Esophagus squamous epithelium (tissue), 5 donors: ENCODE measurements at regions of chr3 and their contacts with region 1.

Region 1: DNA sequence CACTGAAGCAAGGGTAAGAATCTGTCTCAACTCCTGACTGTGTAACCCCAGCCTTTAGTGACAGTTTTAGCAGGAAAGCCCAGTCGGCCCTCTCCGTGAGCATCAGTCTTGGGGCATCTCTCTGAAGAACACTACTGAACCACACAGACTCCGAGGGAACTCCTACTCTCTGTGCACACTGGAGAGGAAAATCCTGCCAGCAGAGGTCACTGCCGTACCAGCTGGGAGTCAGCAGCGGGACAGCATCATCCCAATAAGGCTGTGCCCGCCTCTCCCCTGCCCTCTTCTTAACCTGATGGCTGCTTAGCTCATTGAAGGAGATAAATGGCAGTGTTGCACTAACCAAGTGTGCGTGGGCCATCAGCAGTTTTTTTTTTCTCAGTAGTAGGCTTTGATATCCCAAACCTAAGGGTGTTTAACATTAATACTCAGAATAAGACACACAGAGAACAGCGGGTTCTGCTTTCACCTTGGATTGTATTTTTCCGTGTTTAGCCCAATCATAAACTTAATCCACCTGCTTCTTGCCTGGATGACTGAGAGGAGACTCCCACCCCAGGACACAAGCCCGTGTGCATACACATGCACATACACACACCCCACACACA is 26.6 kb upstream of the RASA2 start:
- DNase-seq: peak; percentile 27
- H3K4me3 ChIP-seq: no peak overlapping the region
- H3K27ac ChIP-seq: no peak overlapping the region
- H3K4me1 ChIP-seq: peaks cover 0 to 9% (median 0%) of the 10 kb centered on the region in 3 donors
- H3K27me3 ChIP-seq: peaks cover 0 to 22% (median 0%) of the 10 kb centered on the region in 4 donors
- CTCF ChIP-seq: peak; percentile 80 to 89 (median 82)
- POLR2A ChIP-seq: no peak

Region 2: DNA sequence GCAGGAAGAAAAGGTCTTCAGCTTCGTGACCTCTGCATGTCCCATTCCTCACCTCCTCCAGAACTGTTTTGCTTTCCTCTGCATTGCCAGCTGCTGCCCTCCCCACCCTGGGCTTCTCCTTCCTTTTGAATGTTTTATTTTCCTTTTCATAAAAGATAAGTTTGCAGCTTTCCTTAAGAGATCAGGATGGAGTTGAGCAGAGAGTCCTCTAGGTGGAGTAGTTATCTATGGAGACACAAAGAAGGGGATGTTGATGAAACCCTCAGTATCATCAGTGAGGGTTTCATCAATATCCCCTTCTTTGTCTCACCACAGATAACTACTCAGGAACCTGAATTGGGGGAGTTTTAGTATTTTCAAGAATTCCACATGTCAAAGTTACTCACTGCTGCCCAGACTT is 537.6 kb before region 1 on chr3:
- intact Hi-C with region 1: no loop called
- DNase-seq: no peak
- H3K4me3 ChIP-seq: no peak overlapping the region
- H3K27ac ChIP-seq: no peak overlapping the region
- H3K4me1 ChIP-seq: no peaks in the 10 kb centered on the region
- H3K27me3 ChIP-seq: peaks cover 0 to 15% (median 0%) of the 10 kb centered on the region in 4 donors
- CTCF ChIP-seq: peak in 2 of 6 experiments; percentile 7 to 16
- POLR2A ChIP-seq: no peak

Region 3: DNA sequence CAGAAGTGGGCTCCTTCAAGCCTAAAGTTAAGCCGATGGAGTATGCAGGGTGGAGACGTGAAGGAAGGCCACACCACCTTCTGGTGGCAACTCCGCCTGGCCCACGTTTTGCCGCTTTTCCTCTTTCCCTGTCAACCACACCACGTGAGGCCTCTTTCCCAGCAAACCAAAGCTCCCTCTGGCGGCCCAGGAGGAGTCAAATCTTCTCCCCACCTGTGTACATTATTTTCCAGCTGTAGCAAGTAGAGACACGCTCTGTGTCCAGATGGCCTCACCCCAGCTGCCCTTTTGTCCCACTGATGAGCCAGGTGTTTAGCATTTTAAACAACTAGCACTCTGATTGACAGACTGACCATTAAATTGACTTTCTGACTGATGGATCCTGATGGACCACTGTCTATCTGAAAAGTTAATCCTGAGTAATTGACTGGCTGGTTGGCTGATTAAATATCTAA is 151.5 kb before region 1 on chr3:
- intact Hi-C with region 1: loop called (anchors 5 kb)
- DNase-seq: no peak
- H3K4me3 ChIP-seq: no peak overlapping the region
- H3K27ac ChIP-seq: no peak overlapping the region
- H3K4me1 ChIP-seq: peaks cover 0 to 26% (median 8%) of the 10 kb centered on the region in 3 donors
- H3K27me3 ChIP-seq: no peaks in the 10 kb centered on the region
- CTCF ChIP-seq: peak in 5 of 6 experiments; percentile 23 to 65 (median 43)
- POLR2A ChIP-seq: no peak

Region 4: GRCh38 chr3:141336672-141337522 is 123.3 kb before region 1 on chr3:
- intact Hi-C with region 1: no loop called
- DNase-seq: no peak
- H3K4me3 ChIP-seq: no peak overlapping the region
- H3K27ac ChIP-seq: no peak overlapping the region
- H3K4me1 ChIP-seq: peaks cover 0 to 8% (median 0%) of the 10 kb centered on the region in 3 donors
- H3K27me3 ChIP-seq: peaks cover 0 to 99% (median 0%) of the 10 kb centered on the region in 4 donors
- CTCF ChIP-seq: no peak
- POLR2A ChIP-seq: no peak